Activated CD8-positive, alpha-beta T cell treated with anti-CD3 and anti-CD28 coated beads, Interleukin-2, amount 10 ng/mL, durations not matched to agents 7 days and 5 days (primary cell): ENCODE measurements at regions of chr2 and their contacts with region 1.

Region 1: GRCh38 chr2:159921752-159922404 is 123.9 kb upstream of the CD302 start:
- DNase-seq: peak; percentile 78
- ATAC-seq: peak; percentile 92
- H3K4me3 Mint-ChIP-seq: no peak overlapping the region
- H3K27ac Mint-ChIP-seq: no peak overlapping the region
- H3K4me1 Mint-ChIP-seq: peaks cover 6% of the 10 kb centered on the region
- H3K27me3 Mint-ChIP-seq: peaks cover 29% of the 10 kb centered on the region

Region 2: DNA sequence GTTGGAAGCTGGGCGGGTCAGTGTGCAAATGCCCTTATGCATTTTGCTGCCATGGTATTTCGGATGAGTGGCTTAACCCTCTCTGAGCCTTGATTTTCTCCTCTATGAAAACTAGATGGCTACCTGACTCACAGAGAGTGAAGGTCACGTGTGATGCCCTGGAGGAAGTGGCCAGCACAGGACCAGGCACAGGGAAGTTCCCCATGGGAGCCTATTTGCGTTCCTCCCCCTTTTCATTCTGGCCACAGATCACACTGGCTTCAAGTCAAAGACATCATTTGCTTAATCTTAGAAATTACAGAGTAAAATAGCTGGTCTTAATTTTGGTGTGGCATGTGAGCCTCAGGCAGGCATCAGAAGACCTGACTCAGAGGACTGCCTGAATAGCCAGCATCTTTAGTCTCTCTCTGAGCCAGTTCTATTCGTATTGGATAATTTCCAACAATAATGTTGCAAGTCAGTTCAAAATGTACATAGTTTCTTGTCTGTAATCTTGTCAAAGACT is 66.3 kb before region 1 on chr2:
- CTCF ChIA-PET with region 1: no interaction called
- POLR2A ChIA-PET with region 1: no interaction called
- DNase-seq: no peak
- ATAC-seq: no peak
- H3K4me3 Mint-ChIP-seq: no peak overlapping the region
- H3K27ac Mint-ChIP-seq: no peak overlapping the region
- H3K4me1 Mint-ChIP-seq: no peaks in the 10 kb centered on the region
- H3K27me3 Mint-ChIP-seq: no peaks in the 10 kb centered on the region

Region 3: DNA sequence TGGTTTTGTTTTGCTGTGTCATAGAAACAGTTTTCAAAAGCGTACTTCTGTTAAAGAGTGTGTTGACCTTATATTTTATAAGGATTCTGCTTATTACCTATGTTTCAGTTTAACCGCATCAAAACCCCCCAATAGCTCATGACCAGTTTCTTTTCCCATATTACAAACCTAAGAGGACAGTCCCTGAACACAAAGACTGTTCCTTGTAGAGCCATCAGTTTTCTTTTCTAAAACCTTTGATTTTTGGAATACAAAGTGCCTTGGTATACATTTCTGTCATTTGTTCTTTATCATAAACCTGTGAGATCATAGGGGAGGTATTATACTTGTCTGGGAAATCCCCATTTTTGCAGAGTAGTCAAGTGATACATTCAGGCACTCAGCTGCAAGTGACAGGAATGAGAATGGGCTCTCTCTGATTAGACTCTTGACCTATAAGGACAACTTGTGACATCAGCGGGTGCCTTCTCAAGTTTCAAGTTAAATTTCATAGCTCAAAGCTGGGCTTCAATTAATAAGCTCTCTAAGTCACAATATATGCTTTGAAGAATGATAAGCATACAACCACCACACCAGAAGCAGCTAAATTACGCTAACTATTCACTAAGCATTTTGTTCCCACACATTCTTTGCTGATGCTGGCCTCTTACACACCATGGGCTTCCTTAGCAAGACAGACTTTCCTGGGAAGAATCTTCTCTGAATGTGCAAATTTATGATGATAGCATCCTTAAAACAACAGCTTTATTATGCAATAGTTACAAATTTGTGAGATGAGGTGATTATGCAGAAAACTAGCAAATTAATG is 26.4 kb before region 1 on chr2:
- CTCF ChIA-PET with region 1: interaction called, 15 read pairs
- POLR2A ChIA-PET with region 1: interaction called, 4 read pairs
- DNase-seq: no peak
- ATAC-seq: no peak
- H3K4me3 Mint-ChIP-seq: no peak overlapping the region
- H3K27ac Mint-ChIP-seq: no peak overlapping the region
- H3K4me1 Mint-ChIP-seq: peaks cover 16% of the 10 kb centered on the region
- H3K27me3 Mint-ChIP-seq: no peaks in the 10 kb centered on the region

Region 4: DNA sequence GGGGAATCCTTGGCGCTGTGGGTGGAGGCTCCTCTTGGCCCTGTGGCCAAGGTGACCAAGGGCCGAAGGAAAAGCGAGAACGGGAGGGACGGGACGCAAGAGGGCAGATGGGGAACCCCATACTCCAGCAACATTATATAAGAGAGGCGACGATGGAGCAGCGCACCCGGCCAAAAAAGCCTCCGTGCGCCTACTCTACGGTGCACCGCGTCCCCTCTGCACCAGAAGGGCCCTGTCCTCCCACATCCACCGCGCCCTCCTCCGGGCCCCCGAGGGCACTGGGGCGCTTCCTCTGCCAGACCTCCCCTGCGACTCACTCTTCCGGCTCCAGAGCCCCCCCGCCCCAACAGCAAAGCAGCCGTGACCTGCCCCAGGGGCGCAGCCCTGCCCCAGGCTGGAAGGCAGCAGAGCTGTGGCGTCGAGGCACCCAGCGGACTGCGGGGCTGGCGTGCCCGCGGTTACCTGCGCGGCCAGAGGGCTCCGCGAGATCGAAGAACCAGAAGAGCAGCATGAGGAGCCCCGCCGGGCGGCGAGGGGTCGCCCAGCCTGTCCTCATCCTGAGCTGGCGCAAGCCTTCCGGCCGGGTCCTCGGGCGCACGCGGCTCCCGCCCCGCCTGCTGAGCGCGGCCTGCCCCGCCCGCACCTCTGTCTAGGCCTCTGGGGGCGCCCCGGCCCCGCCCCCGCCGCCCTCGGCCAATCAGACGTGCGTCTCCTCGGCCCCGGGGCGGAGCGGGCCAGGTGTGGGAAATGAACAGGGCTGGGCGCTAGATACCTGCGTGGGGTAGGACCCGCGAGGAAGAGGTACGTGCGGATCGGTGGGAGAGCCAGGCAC is 17.5 kb before region 1 on chr2:
- CTCF ChIA-PET with region 1: interaction called, 10 read pairs
- POLR2A ChIA-PET with region 1: no interaction called
- DNase-seq: peak; percentile 86
- ATAC-seq: peak; percentile 92
- H3K4me3 Mint-ChIP-seq: peak within 1 kb of the TSS; percentile 98
- H3K27ac Mint-ChIP-seq: peak within 1 kb of the TSS; percentile 98
- H3K4me1 Mint-ChIP-seq: peaks cover 35% of the 10 kb centered on the region
- H3K27me3 Mint-ChIP-seq: no peaks in the 10 kb centered on the region